ENCODE measurements at regions of chr1 and their contacts with region 1.

Region 1: DNA sequence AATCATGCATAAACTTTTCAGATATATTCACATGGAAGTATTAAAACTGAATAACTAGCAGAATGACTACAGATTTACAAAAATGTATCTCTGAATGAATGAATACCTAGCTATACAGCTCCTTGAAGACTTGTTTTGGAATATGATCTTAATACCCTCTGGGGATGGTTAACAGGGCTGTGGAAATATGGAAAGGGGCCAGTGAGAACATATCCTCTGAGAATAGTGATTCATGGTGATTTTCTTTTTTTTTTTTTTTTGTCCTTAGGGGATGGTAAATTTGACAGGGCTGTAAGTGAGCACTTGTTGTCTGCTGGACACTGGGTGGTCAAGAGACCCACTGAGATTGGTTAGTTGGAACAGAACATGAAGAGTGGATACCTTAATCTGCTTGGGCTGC is 80.7 kb upstream of the HP1BP3 start:
- DNase-seq: no peak
- CTCF ChIP-seq: no peak

Region 2: GRCh38 chr1:19903600-19903999 is 964.2 kb before region 1 on chr1:
- in situ Hi-C with region 1: no loop called
- DNase-seq: no peak
- CTCF ChIP-seq: no peak

Region 3: DNA sequence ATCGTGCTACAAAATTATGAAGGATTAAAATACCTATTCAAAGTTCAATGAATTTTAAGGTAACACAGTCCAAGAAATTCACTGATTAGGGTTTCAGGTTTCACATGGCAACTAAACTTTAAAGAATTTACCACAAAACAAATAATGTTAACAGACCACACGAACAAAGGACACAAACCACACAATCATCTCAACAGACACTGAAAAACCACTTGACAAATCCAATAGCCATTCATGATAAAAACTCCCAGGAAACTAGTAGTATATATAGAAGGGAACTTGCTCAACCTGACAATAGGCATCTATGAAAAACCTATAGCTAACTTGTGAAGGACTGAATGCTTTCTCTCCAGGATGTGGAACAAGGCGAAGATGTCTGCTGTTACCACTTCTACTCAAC is 114.3 kb before region 1 on chr1:
- in situ Hi-C with region 1: no loop called
- DNase-seq: no peak
- CTCF ChIP-seq: no peak

Region 4: DNA sequence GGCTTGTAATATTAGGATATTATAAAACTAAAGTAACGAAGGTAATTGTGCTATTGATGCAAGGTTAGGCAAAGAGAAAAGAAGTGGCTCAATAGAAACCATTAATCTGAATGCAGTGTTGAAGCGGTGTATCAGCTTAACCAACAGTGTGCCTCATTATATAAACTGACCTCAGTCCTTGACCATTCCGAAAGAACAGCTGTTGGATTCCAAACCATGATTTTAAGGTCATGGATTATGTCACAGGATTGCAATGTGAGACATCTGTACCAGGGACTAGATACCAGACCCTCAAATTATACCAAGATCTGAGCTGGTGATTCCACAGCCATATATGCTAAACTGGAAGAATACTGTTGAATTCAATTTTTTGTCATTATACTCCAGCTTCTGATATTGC is 53.4 kb after region 1 on chr1:
- in situ Hi-C with region 1: loop called (anchors 10 kb)
- DNase-seq: no peak
- CTCF ChIP-seq: no peak

Measured in GM13976 (cell line).